ENCODE measurements at regions of chr11 and their contacts with region 1.

Region 1: GRCh38 chr11:14454861-14455632 is 44.6 kb downstream of the COPB1 start:
- DNase-seq: no peak
- H3K4me3 ChIP-seq: no peak overlapping the region
- H3K27ac ChIP-seq: no peak overlapping the region
- H3K4me1 ChIP-seq: peaks cover 0 to 5% (median 0%) of the 10 kb centered on the region in 4 donors
- H3K27me3 ChIP-seq: no peaks in the 10 kb centered on the region
- CTCF ChIP-seq: peak; percentile 30 to 44

Region 2: DNA sequence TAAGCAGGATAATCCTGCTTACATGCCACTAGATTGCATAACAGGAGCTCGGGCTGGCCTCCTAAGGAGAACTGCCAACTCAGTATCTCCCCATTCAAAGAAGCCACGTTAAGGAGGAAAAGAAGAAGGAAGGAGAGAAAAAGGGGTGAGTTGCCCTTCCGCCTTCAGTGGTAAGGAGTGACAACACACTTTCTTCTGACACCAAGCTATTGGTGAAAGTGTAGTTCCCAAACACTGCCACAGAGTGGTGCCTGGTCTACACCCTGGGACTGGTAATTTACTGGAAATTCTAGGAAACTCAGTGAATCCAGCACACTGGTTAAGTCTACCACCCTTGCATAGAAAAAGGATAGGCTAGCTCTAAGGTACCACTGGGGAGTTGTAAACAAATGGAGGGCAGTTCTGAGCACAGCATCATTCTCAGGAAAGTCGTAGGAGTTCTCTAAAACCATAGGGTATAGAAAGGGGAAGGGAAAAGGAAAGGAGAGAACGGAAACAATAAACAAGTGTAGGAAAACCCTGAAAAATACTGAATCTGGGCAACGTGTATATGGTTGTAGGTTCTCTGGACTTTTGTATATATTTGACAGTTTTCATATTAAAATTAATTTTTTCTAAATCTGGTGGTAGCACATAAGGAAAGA is 154.3 kb before region 1 on chr11:
- intact Hi-C with region 1: loop called (anchors 2 kb)
- DNase-seq: peak; percentile 66 to 77
- H3K4me3 ChIP-seq: no peak overlapping the region
- H3K27ac ChIP-seq: no peak overlapping the region
- H3K4me1 ChIP-seq: peaks cover 0 to 33% (median 4%) of the 10 kb centered on the region in 4 donors
- H3K27me3 ChIP-seq: no peaks in the 10 kb centered on the region
- CTCF ChIP-seq: peak; percentile 83 to 84

Region 3: GRCh38 chr11:14358729-14359439 is 96.2 kb before region 1 on chr11 and contains the start of gene RRAS2:
- intact Hi-C with region 1: loop called (anchors 10 kb)
- DNase-seq: peak; percentile 77 to 85
- H3K4me3 ChIP-seq: peak within 1 kb of the TSS; percentile 66 to 71
- H3K27ac ChIP-seq: peak within 1 kb of the TSS; percentile 76 to 78
- H3K4me1 ChIP-seq: peaks cover 0 to 19% (median 8%) of the 10 kb centered on the region in 4 donors
- H3K27me3 ChIP-seq: no peaks in the 10 kb centered on the region
- CTCF ChIP-seq: no peak

Region 4: DNA sequence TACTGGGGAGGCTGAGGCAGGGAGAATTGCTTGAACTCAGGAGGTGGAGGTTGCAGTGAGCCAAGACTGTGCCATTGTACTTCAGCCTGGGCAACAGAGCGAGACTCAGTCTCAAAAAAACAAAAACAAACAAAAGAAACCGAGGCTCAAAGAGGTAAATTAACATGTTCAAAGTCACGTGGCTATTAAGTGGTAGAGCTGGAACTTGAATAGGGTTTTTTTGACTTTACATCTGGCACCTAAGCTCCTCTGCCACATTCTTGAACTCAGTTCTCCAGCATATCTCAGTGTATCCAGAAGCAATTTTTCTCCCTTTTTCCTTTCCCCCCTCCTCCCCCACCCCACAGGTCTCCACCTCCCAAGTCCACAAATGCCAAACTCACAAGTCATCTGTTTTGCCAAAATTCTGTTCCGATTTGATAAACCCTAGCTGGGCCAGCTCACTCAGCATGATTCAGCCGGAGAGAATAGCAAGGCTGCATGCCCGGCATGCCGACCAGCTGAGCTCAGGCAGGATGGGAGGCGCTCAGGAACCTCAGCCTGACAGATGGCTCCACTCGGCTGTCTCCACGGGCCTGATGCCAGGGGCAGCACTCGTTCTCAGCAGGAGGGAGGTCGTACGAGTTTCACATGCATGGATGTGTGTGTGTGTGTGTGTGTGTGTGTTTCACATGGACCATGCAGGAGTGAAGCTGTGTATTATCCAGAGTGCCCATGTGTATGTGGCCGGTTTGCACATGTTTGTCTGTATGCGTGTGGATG is 32.8 kb before region 1 on chr11:
- intact Hi-C with region 1: no loop called
- DNase-seq: peak; percentile 80 to 89
- H3K4me3 ChIP-seq: no peak overlapping the region
- H3K27ac ChIP-seq: peak overlapping the region; percentile 36 to 41
- H3K4me1 ChIP-seq: peaks cover 0 to 33% (median 18%) of the 10 kb centered on the region in 4 donors
- H3K27me3 ChIP-seq: no peaks in the 10 kb centered on the region
- CTCF ChIP-seq: no peak

Region 5: DNA sequence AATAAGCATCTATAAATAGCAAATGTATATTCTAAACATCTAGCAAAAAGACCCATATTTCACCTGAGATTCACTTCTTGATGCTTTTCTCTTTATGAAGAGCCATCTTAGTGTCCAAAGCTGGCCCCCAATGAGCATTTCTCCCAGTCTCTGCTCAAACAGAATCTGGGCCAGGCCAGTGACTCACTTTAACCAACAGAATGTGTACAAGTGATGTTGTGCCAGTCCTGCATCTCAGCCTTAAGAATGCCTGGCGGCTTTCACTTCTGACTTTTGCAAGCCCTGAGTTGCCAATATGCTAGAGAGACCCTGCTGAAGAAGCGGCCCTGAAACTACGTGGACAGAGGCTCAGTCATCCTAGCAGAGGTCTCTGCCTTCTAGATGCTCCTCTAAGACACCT is 51.5 kb after region 1 on chr11:
- intact Hi-C with region 1: no loop called
- DNase-seq: no peak
- H3K4me3 ChIP-seq: no peak overlapping the region
- H3K27ac ChIP-seq: no peak overlapping the region
- H3K4me1 ChIP-seq: no peaks in the 10 kb centered on the region
- H3K27me3 ChIP-seq: no peaks in the 10 kb centered on the region
- CTCF ChIP-seq: no peak

Measured in tibial artery (tissue), 4 donors.